Gastrocnemius medialis (tissue), 4 donors: ENCODE measurements at regions of chr14 and their contacts with region 1.

Region 1: GRCh38 chr14:68670374-68671135 is 122.3 kb downstream of the ZFP36L1 start:
- DNase-seq: no peak
- ATAC-seq: no peak
- H3K4me3 ChIP-seq: no peak overlapping the region
- H3K27ac ChIP-seq: peak overlapping the region; percentile 19 to 63 (median 48)
- H3K4me1 ChIP-seq: peaks cover 38 to 52% of the 10 kb centered on the region in 2 donors
- H3K27me3 ChIP-seq: no peaks in the 10 kb centered on the region
- CTCF ChIP-seq: no peak
- POLR2A ChIP-seq: no peak

Region 2: GRCh38 chr14:68718023-68718995 is 47.8 kb after region 1 on chr14:
- in situ Hi-C with region 1: no loop called
- intact Hi-C with region 1: loop called (anchors 1 kb)
- DNase-seq: no peak
- ATAC-seq: no peak
- H3K4me3 ChIP-seq: no peak overlapping the region
- H3K27ac ChIP-seq: no peak overlapping the region
- H3K4me1 ChIP-seq: peaks cover 0 to 8% of the 10 kb centered on the region in 2 donors
- H3K27me3 ChIP-seq: no peaks in the 10 kb centered on the region
- CTCF ChIP-seq: peak in 3 of 5 experiments; percentile 16 to 26 (median 25)
- POLR2A ChIP-seq: no peak

Region 3: GRCh38 chr14:68741839-68742470 is 71.4 kb after region 1 on chr14:
- in situ Hi-C with region 1: no loop called
- intact Hi-C with region 1: no loop called
- DNase-seq: no peak
- ATAC-seq: no peak
- H3K4me3 ChIP-seq: no peak overlapping the region
- H3K27ac ChIP-seq: no peak overlapping the region
- H3K4me1 ChIP-seq: peaks cover 0 to 2% of the 10 kb centered on the region in 2 donors
- H3K27me3 ChIP-seq: no peaks in the 10 kb centered on the region
- CTCF ChIP-seq: no peak
- POLR2A ChIP-seq: no peak